ENCODE measurements at regions of chr1 and their contacts with region 1.

Region 1: GRCh38 chr1:67561704-67562113 is 123.3 kb upstream of the GADD45A start:
- DNase-seq: peak; percentile 77 to 85 (median 83)
- H3K4me3 ChIP-seq: no peak overlapping the region
- H3K27ac ChIP-seq: no peak overlapping the region
- H3K4me1 ChIP-seq: peaks cover 0 to 32% (median 22%) of the 10 kb centered on the region in 4 experiments
- H3K27me3 ChIP-seq: no peaks in the 10 kb centered on the region

Region 2: GRCh38 chr1:67404212-67404620 is 157.5 kb before region 1 on chr1:
- CTCF ChIA-PET with region 1: no interaction called
- POLR2A ChIA-PET with region 1: no interaction called
- DNase-seq: no peak
- H3K4me3 ChIP-seq: no peak overlapping the region
- H3K27ac ChIP-seq: no peak overlapping the region
- H3K4me1 ChIP-seq: no peaks in the 10 kb centered on the region
- H3K27me3 ChIP-seq: no peaks in the 10 kb centered on the region

Region 3: DNA sequence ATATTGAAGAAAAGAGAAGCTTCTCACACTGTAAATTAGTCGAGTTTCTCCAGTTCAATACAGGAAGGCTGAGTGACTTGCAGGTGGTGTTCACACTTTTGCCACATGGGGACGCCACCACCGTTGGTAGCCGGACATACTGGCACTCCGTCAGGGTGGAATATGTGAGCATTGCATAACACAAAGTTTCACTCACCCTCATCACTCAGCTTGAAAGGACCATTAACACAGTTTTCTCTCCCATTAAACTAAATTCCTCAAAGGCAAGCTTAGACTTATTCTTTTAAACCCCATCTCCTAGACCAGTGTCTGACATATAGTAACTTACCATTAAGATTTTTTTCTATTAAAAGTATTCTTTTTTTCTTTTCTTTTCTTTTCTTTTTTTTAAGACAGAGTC is 26.2 kb before region 1 on chr1:
- CTCF ChIA-PET with region 1: interaction called, 66 read pairs
- POLR2A ChIA-PET with region 1: no interaction called
- DNase-seq: peak; percentile 76 to 90 (median 86)
- H3K4me3 ChIP-seq: no peak overlapping the region
- H3K27ac ChIP-seq: no peak overlapping the region
- H3K4me1 ChIP-seq: peaks cover 0 to 4% (median 0%) of the 10 kb centered on the region in 4 experiments
- H3K27me3 ChIP-seq: no peaks in the 10 kb centered on the region

Region 4: DNA sequence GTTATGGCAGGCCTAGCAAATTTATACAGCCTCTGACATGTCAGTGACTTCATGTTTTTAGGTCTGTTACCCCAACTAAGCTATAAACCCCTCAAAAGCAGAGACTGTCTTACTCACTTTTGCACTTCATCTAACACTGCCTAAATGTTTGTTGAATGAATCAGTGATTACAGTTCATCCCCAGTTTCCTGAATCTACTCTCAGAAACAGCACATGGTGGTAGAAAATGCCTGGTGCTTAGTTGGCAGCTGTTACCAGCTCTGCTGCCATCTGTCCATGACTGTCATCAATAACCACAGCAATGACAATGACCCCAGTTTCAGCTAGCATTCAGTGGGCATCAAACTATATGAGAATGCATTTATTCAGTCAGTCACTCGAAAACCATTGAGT is 21.0 kb before region 1 on chr1:
- CTCF ChIA-PET with region 1: interaction called, 66 read pairs
- POLR2A ChIA-PET with region 1: no interaction called
- DNase-seq: no peak
- H3K4me3 ChIP-seq: no peak overlapping the region
- H3K27ac ChIP-seq: no peak overlapping the region
- H3K4me1 ChIP-seq: no peaks in the 10 kb centered on the region
- H3K27me3 ChIP-seq: no peaks in the 10 kb centered on the region

Region 5: DNA sequence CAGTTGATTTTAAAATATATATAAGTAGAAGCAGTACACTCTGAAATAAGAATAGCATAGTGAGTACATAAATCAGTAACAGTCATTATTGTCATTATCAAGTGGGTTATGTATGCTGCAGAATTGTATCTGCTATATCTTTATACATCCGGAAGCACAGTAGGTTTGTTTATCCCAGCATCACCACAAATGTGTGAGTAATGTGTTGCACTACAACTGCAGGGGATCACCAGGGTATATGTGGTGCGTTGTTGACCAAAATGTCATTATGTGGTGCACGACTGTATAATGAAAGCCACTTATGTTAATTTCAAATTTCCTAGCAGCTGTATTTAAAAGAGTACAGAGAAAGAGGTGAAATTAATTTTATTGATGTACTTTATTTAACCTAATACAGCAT is 35.6 kb after region 1 on chr1:
- CTCF ChIA-PET with region 1: no interaction called
- POLR2A ChIA-PET with region 1: no interaction called
- DNase-seq: no peak
- H3K4me3 ChIP-seq: no peak overlapping the region
- H3K27ac ChIP-seq: no peak overlapping the region
- H3K4me1 ChIP-seq: no peaks in the 10 kb centered on the region
- H3K27me3 ChIP-seq: no peaks in the 10 kb centered on the region

Region 6: GRCh38 chr1:67713057-67713846 is 151.5 kb after region 1 on chr1:
- CTCF ChIA-PET with region 1: interaction called, 3 read pairs
- POLR2A ChIA-PET with region 1: interaction called, 11 read pairs
- DNase-seq: no peak
- H3K4me3 ChIP-seq: no peak overlapping the region
- H3K27ac ChIP-seq: peak overlapping the region in 1 of 2 experiments; percentile 18
- H3K4me1 ChIP-seq: peaks cover 0 to 26% (median 23%) of the 10 kb centered on the region in 4 experiments
- H3K27me3 ChIP-seq: no peaks in the 10 kb centered on the region

Region 7: GRCh38 chr1:67753776-67754525 is 192.2 kb after region 1 on chr1:
- CTCF ChIA-PET with region 1: interaction called, 148 read pairs
- POLR2A ChIA-PET with region 1: interaction called, 3 read pairs
- DNase-seq: no peak
- H3K4me3 ChIP-seq: peak overlapping the region in 1 of 7 experiments; percentile 37
- H3K27ac ChIP-seq: no peak overlapping the region
- H3K4me1 ChIP-seq: peaks cover 2 to 32% (median 26%) of the 10 kb centered on the region in 4 experiments
- H3K27me3 ChIP-seq: no peaks in the 10 kb centered on the region